Activated T-helper 1 cell treated with anti-CD3 and anti-CD28 coated beads, Interleukin-12 subunit alpha, Interleukin-12 subunit beta, Interleukin-2, Interleukin-4 antibody, amounts not matched to agents 30 ng/mL and 10 ng/mL and 1 ng/mL, durations not matched to agents 14 hours and 24 hours and 36 hours (primary cell): ENCODE measurements at regions of chr6 and their contacts with region 1.

Region 1: DNA sequence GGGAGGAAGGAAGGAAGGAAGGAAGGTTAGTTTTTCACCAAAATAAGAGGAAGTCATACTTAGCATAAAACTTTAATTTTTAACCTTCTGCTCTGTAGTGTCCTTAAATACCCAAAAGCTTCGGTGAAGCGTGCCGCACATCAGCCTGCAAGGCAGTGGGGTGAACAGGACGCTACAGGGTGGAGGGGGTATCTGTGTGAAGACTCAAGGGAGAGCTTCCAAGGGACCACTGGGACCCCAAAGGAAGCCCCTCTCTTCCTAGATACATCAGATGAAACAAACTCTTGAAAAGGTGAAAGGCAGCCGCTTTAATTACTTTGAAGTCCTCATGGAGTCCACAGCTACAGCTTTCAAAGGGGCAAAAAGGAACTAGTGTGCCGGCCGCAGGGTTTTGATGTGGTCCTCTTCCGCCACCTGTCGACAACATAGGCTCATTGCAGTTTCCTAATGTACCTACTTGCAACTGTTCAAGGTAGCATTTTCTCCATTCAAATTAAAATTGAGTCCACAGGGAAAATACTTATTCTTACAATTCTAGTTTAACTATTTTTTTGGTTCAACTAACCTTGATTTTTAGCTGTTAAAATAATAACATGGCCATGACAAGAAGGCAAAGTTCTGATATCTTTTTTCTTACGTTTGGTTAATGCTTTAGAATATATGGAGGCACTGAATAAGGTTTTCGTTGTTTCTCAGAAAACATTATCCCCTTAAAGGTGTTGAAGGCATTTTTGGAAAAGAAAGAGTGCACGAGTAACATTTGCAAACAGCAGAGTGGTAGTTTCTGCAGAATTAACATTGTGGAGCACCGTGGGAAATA is 135.0 kb upstream of the RIPOR2 start:
- DNase-seq: peak; percentile 74
- H3K4me3 Mint-ChIP-seq: no peak overlapping the region
- H3K27ac Mint-ChIP-seq: peak overlapping the region; percentile 86
- H3K4me1 Mint-ChIP-seq: peaks cover 10% of the 10 kb centered on the region
- H3K27me3 Mint-ChIP-seq: peaks cover 3% of the 10 kb centered on the region

Region 2: DNA sequence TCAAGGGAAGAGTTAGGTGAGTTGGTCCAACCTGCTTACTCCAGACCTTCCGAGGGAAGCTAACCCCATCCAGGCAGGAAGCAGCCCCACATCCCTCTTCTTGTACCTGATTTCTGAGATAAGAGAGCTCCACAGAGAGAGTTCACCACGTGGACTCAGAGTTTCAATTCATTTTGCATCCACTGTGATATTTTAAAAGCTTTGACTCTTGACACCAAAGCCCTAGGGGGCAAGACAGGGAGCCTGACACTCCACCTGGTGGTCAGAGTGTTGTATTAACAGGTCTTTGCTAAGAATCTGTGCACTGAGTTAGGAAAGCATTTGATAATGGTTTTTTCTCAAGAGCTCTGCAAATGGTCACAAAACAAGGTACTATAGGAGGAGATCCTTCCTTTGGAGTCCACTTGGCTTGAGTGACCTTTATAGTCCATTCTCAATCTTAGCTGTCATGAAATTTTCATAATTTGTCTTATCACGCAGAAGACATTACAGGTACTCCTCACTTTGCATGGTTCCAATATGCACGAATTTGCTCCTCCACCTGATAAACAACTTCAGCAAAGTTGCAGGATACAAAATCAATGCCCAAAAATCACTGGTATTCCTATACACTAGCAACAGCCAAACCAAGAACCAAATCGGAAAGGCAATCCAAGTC is 78.8 kb before region 1 on chr6:
- intact Hi-C with region 1: loop called (anchors 1 kb)
- DNase-seq: peak; percentile 71
- H3K4me3 Mint-ChIP-seq: peak overlapping the region; percentile 21
- H3K27ac Mint-ChIP-seq: peak overlapping the region; percentile 80
- H3K4me1 Mint-ChIP-seq: peaks cover 40% of the 10 kb centered on the region
- H3K27me3 Mint-ChIP-seq: no peaks in the 10 kb centered on the region

Region 3: GRCh38 chr6:25017932-25018567 is 52.7 kb before region 1 on chr6:
- intact Hi-C with region 1: loop called (anchors 1 kb)
- DNase-seq: peak; percentile 70
- H3K4me3 Mint-ChIP-seq: no peak overlapping the region
- H3K27ac Mint-ChIP-seq: no peak overlapping the region
- H3K4me1 Mint-ChIP-seq: peaks cover 50% of the 10 kb centered on the region
- H3K27me3 Mint-ChIP-seq: no peaks in the 10 kb centered on the region

Region 4: GRCh38 chr6:25027221-25027916 is 43.4 kb before region 1 on chr6:
- intact Hi-C with region 1: loop called (anchors 1 kb)
- DNase-seq: peak; percentile 72
- H3K4me3 Mint-ChIP-seq: peak overlapping the region; percentile 74
- H3K27ac Mint-ChIP-seq: peak overlapping the region; percentile 83
- H3K4me1 Mint-ChIP-seq: peaks cover 48% of the 10 kb centered on the region
- H3K27me3 Mint-ChIP-seq: no peaks in the 10 kb centered on the region

Region 5: GRCh38 chr6:25042036-25042521 is 28.7 kb before region 1 on chr6:
- intact Hi-C with region 1: loop called (anchors 1 kb)
- DNase-seq: peak; percentile 30
- H3K4me3 Mint-ChIP-seq: peak overlapping the region; percentile 88
- H3K27ac Mint-ChIP-seq: peak overlapping the region; percentile 95
- H3K4me1 Mint-ChIP-seq: peaks cover 66% of the 10 kb centered on the region
- H3K27me3 Mint-ChIP-seq: no peaks in the 10 kb centered on the region

Region 6: GRCh38 chr6:25050356-25050755 is 20.4 kb before region 1 on chr6:
- intact Hi-C with region 1: loop called (anchors 2 kb)
- DNase-seq: peak; percentile 32
- H3K4me3 Mint-ChIP-seq: peak overlapping the region; percentile 74
- H3K27ac Mint-ChIP-seq: peak overlapping the region; percentile 95
- H3K4me1 Mint-ChIP-seq: peaks cover 59% of the 10 kb centered on the region
- H3K27me3 Mint-ChIP-seq: no peaks in the 10 kb centered on the region